Caco-2 (cell line): ENCODE measurements at regions of chr12 and their contacts with region 1.

Region 1: DNA sequence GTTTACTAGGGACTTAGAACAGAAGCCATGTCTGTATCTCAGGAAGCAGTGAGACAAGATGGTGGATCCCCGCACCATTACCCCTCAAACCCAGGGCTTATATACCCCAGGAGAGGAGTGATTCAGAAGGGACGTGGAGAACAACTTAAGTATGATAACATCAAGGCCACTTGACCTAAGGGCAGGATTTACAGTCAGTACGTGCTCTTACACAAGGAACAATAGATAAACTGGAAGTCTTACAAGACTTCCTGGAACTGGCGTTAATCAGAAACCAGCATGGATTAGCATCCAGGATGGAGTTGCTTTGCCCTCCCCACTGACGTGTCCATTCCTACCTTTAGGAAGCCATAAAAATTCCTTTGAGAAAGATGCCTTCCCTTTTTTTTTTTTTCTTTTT is 8.6 kb upstream of the ETFBKMT start:
- DNase-seq: peak; percentile 82 to 90
- H3K4me3 ChIP-seq: no peak overlapping the region
- H3K4me3 Mint-ChIP-seq: peak overlapping the region; percentile 38
- H3K27ac Mint-ChIP-seq: peak overlapping the region; percentile 95
- H3K4me1 ChIP-seq: peaks cover 30% of the 10 kb centered on the region
- H3K4me1 Mint-ChIP-seq: peaks cover 25% of the 10 kb centered on the region
- H3K27me3 ChIP-seq: no peaks in the 10 kb centered on the region
- H3K27me3 Mint-ChIP-seq: no peaks in the 10 kb centered on the region
- CTCF ChIP-seq: no peak

Region 2: GRCh38 chr12:30308011-30308705 is 1342.8 kb before region 1 on chr12:
- CTCF ChIA-PET with region 1: no interaction called
- POLR2A ChIA-PET with region 1: no interaction called
- intact Hi-C with region 1: no loop called
- DNase-seq: no peak
- H3K4me3 ChIP-seq: no peak overlapping the region
- H3K4me3 Mint-ChIP-seq: no peak overlapping the region
- H3K27ac Mint-ChIP-seq: no peak overlapping the region
- H3K4me1 ChIP-seq: no peaks in the 10 kb centered on the region
- H3K4me1 Mint-ChIP-seq: no peaks in the 10 kb centered on the region
- H3K27me3 ChIP-seq: no peaks in the 10 kb centered on the region
- H3K27me3 Mint-ChIP-seq: no peaks in the 10 kb centered on the region
- CTCF ChIP-seq: no peak

Region 3: GRCh38 chr12:32062881-32063280 is 412.0 kb after region 1 on chr12:
- CTCF ChIA-PET with region 1: interaction called, 8 read pairs
- POLR2A ChIA-PET with region 1: no interaction called
- intact Hi-C with region 1: loop called (anchors 2 kb)
- DNase-seq: no peak
- H3K4me3 ChIP-seq: no peak overlapping the region
- H3K4me3 Mint-ChIP-seq: no peak overlapping the region
- H3K27ac Mint-ChIP-seq: no peak overlapping the region
- H3K4me1 ChIP-seq: no peaks in the 10 kb centered on the region
- H3K4me1 Mint-ChIP-seq: no peaks in the 10 kb centered on the region
- H3K27me3 ChIP-seq: no peaks in the 10 kb centered on the region
- H3K27me3 Mint-ChIP-seq: no peaks in the 10 kb centered on the region
- CTCF ChIP-seq: no peak